ENCODE measurements at regions of chr19 and their contacts with region 1.

Region 1: GRCh38 chr19:47707135-47707925 is 5.9 kb upstream of the EHD2 start:
- DNase-seq: peak; percentile 68
- H3K4me3 ChIP-seq: no peak overlapping the region
- H3K27ac ChIP-seq: no peak overlapping the region
- H3K4me1 ChIP-seq: no peaks in the 10 kb centered on the region
- H3K27me3 ChIP-seq: no peaks in the 10 kb centered on the region
- CTCF ChIP-seq: peak; percentile 80 to 93
- POLR2A ChIP-seq: no peak

Region 2: DNA sequence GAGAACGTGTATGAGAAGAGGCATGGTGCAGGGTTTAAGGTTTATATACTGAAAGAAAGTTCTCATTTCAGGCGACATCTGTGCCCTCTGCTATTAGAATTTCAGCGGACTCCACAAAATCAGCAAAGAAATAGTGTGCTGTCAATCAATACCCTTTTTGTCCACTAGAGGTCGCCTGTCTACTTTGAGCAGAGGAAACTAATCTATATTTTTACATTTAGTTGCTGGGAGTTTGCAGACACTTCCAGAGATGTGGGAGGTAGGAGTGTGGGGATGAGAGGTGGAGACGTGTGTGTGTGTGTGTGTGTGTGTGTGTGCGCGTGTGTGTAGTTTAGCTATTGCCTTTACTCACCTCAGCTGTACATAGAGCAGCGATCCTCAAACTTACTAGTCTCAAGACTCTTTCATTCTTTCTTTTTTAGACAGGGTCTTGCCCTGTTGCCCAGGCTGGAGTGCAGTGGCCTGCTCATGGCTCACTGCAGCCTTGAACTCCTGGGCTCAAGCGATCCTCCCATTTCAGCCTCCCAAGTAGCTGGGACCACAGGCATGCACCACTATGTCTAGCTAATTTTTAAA is 422.9 kb before region 1 on chr19:
- CTCF ChIA-PET with region 1: no interaction called
- POLR2A ChIA-PET with region 1: no interaction called
- dilution Hi-C with region 1: no loop called
- intact Hi-C with region 1: loop called (anchors 5 kb)
- DNase-seq: peak; percentile 57
- H3K4me3 ChIP-seq: no peak overlapping the region
- H3K27ac ChIP-seq: no peak overlapping the region
- H3K4me1 ChIP-seq: no peaks in the 10 kb centered on the region
- H3K27me3 ChIP-seq: no peaks in the 10 kb centered on the region
- CTCF ChIP-seq: peak; percentile 77
- POLR2A ChIP-seq: no peak

Region 3: GRCh38 chr19:47296036-47296435 is 411.3 kb before region 1 on chr19:
- CTCF ChIA-PET with region 1: interaction called, 9 read pairs
- POLR2A ChIA-PET with region 1: no interaction called
- dilution Hi-C with region 1: no loop called
- intact Hi-C with region 1: loop called (anchors 5 kb)
- DNase-seq: peak; percentile 55
- H3K4me3 ChIP-seq: no peak overlapping the region
- H3K27ac ChIP-seq: no peak overlapping the region
- H3K4me1 ChIP-seq: no peaks in the 10 kb centered on the region
- H3K27me3 ChIP-seq: no peaks in the 10 kb centered on the region
- CTCF ChIP-seq: peak; percentile 62 to 70
- POLR2A ChIP-seq: no peak

Region 4: GRCh38 chr19:47483800-47484690 is 223.3 kb before region 1 on chr19 and contains the start of gene KPTN:
- CTCF ChIA-PET with region 1: interaction called, 10 read pairs
- POLR2A ChIA-PET with region 1: no interaction called
- dilution Hi-C with region 1: no loop called
- intact Hi-C with region 1: no loop called
- DNase-seq: peak; percentile 91
- H3K4me3 ChIP-seq: peak within 1 kb of the TSS; percentile 71 to 77 (median 77)
- H3K27ac ChIP-seq: peak within 1 kb of the TSS; percentile 88
- H3K4me1 ChIP-seq: peaks cover 3% of the 10 kb centered on the region
- H3K27me3 ChIP-seq: no peaks in the 10 kb centered on the region
- CTCF ChIP-seq: peak; percentile 93 to 97
- POLR2A ChIP-seq: peak; percentile 75
- total RNA-seq, gene KPTN: 13.7 and 15.5 TPM in 2 replicates

Region 5: GRCh38 chr19:47540728-47541127 is 166.6 kb before region 1 on chr19:
- CTCF ChIA-PET with region 1: interaction called, 10 read pairs
- POLR2A ChIA-PET with region 1: no interaction called
- dilution Hi-C with region 1: no loop called
- intact Hi-C with region 1: no loop called
- DNase-seq: no peak
- H3K4me3 ChIP-seq: no peak overlapping the region
- H3K27ac ChIP-seq: no peak overlapping the region
- H3K4me1 ChIP-seq: peaks cover 2% of the 10 kb centered on the region
- H3K27me3 ChIP-seq: peaks cover 9 to 12% of the 10 kb centered on the region in 2 experiments
- CTCF ChIP-seq: no peak
- POLR2A ChIP-seq: no peak

Region 6: DNA sequence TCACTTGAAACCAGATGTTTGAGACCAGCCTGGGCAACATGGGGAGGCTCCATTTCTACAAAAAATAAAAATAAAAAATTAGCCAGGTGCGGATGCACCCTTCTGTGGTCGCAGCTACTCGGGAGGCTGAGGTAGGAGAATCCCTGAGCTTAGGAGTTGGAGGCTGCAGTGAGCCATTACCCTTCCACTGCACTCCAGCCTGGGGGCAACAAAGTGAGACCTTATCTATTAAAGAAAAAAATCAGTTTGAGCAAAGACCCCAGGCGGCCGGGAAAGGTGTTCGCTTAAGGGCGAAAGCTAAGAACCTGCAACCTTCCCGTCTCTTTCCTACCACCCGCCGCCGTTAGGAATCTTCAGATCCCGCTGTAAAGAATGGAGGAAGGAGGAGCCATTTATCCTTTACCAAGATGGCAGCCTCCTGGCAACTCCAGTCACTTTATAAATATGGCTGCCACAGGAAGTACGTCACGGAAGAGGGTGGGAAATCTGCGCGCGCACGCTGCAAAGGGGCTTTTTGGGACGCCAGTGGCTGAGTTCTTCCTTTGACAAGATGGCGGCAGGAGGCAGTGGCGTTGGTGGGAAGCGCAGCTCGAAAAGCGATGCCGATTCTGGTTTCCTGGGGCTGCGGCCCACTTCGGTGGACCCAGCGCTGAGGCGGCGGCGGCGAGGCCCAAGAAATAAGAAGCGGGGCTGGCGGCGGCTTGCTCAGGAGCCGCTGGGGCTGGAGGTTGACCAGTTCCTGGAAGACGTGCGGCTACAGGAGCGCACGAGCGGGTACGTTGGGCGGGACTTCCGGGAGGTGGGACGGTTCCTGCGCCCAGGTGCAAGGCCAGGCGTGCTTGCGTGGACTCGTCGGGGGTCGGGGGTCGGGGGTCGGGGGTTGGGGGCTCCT is 37.9 kb after region 1 on chr19 and contains the start of gene NOP53:
- CTCF ChIA-PET with region 1: interaction called, 258 read pairs
- POLR2A ChIA-PET with region 1: no interaction called
- dilution Hi-C with region 1: no loop called
- intact Hi-C with region 1: no loop called
- DNase-seq: peak; percentile 98
- H3K4me3 ChIP-seq: peak within 1 kb of the TSS; percentile 66 to 87 (median 80)
- H3K27ac ChIP-seq: peak within 1 kb of the TSS; percentile 78
- H3K4me1 ChIP-seq: peaks cover 21% of the 10 kb centered on the region
- H3K27me3 ChIP-seq: no peaks in the 10 kb centered on the region
- CTCF ChIP-seq: no peak
- POLR2A ChIP-seq: peak; percentile 85
- total RNA-seq, gene NOP53: 150 and 189 TPM in 2 replicates

Region 7: DNA sequence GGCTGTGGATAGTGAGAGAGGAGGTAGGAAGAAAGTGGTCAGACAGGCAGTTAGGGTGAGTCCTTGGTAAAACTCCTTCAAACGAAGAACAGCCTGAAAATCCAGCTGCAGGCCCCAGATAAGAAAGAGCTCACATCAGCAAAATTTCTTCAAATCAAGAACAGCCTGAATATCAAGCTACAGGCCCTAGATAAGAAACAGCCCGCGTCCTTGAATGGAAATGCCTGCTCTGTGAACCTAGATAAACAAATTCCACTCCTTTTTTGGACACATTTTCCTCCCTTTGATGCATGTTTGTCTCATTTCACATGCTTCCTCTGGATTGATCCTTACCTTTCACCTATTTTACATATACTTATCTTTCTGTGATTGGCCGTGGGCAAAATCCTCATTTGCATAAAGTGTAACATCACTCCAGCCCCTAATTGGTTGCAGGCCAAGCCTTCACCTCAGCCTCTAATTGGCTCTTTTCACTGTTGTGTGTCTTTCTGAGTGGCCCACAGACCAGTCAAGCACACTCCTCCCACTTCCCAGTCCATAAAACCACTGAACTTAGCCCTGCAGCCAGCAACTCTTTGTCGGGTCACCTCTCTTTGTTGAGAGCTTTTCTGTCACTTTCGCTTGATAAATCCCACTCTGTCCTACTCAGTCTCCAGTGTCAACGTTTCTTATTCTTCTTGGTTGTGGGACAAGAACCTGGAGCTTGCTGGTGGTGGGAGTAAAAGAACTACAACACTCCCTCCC is 184.8 kb after region 1 on chr19:
- CTCF ChIA-PET with region 1: no interaction called
- POLR2A ChIA-PET with region 1: no interaction called
- dilution Hi-C with region 1: no loop called
- intact Hi-C with region 1: no loop called
- DNase-seq: peak; percentile 45
- H3K4me3 ChIP-seq: no peak overlapping the region
- H3K27ac ChIP-seq: no peak overlapping the region
- H3K4me1 ChIP-seq: no peaks in the 10 kb centered on the region
- H3K27me3 ChIP-seq: no peaks in the 10 kb centered on the region
- CTCF ChIP-seq: no peak
- POLR2A ChIP-seq: no peak